ENCODE measurements at regions of chr10 and their contacts with region 1.

Region 1: GRCh38 chr10:96271016-96271829 is at the start of gene BLNK:
- DNase-seq: peak; percentile 40
- ATAC-seq: peak; percentile 56
- H3K4me3 Mint-ChIP-seq: peak within 1 kb of the TSS; percentile 91
- H3K27ac Mint-ChIP-seq: peak within 1 kb of the TSS; percentile 98
- H3K4me1 Mint-ChIP-seq: peaks cover 81% of the 10 kb centered on the region
- H3K27me3 Mint-ChIP-seq: no peaks in the 10 kb centered on the region
- CTCF ChIP-seq: no peak
- total RNA-seq, gene BLNK: 238 and 267 TPM in 2 replicates

Region 2: GRCh38 chr10:96138102-96138501 is 133.1 kb before region 1 on chr10:
- CTCF ChIA-PET with region 1: no interaction called
- POLR2A ChIA-PET with region 1: no interaction called
- intact Hi-C with region 1: no loop called
- DNase-seq: no peak
- ATAC-seq: no peak
- H3K4me3 Mint-ChIP-seq: no peak overlapping the region
- H3K27ac Mint-ChIP-seq: no peak overlapping the region
- H3K4me1 Mint-ChIP-seq: no peaks in the 10 kb centered on the region
- H3K27me3 Mint-ChIP-seq: no peaks in the 10 kb centered on the region
- CTCF ChIP-seq: no peak

Region 3: DNA sequence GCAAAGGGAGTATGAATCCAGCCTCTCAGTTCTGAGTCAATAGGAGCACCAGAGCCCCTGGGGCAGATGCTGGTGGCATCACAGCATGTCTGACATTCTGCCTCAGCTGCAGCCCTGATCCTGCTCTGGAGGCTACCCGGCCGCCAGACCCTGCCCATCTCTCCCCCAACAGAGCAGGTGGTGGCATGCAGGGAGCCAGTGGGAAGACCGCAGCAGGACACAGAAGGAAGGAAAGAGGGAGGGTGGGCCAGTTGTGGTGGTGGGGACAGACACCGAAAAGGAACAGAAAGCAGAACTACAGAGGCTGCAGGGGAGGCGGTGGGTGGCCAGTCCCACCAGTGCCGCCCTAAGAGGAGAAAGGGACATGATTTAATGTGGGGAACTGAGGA is 35.1 kb before region 1 on chr10:
- CTCF ChIA-PET with region 1: interaction called, 90 read pairs
- POLR2A ChIA-PET with region 1: interaction called, 94 read pairs
- intact Hi-C with region 1: no loop called
- DNase-seq: no peak
- ATAC-seq: peak; percentile 67
- H3K4me3 Mint-ChIP-seq: peak overlapping the region; percentile 57
- H3K27ac Mint-ChIP-seq: peak overlapping the region; percentile 85
- H3K4me1 Mint-ChIP-seq: peaks cover 93% of the 10 kb centered on the region
- H3K27me3 Mint-ChIP-seq: no peaks in the 10 kb centered on the region
- CTCF ChIP-seq: no peak

Region 4: GRCh38 chr10:96244354-96244753 is 26.9 kb before region 1 on chr10:
- CTCF ChIA-PET with region 1: interaction called, 4 read pairs
- POLR2A ChIA-PET with region 1: interaction called, 93 read pairs
- intact Hi-C with region 1: loop called (anchors 1 kb)
- DNase-seq: peak; percentile 61
- ATAC-seq: peak; percentile 96
- H3K4me3 Mint-ChIP-seq: peak overlapping the region; percentile 67
- H3K27ac Mint-ChIP-seq: peak overlapping the region; percentile 91
- H3K4me1 Mint-ChIP-seq: peaks cover 80% of the 10 kb centered on the region
- H3K27me3 Mint-ChIP-seq: no peaks in the 10 kb centered on the region
- CTCF ChIP-seq: no peak

Region 5: DNA sequence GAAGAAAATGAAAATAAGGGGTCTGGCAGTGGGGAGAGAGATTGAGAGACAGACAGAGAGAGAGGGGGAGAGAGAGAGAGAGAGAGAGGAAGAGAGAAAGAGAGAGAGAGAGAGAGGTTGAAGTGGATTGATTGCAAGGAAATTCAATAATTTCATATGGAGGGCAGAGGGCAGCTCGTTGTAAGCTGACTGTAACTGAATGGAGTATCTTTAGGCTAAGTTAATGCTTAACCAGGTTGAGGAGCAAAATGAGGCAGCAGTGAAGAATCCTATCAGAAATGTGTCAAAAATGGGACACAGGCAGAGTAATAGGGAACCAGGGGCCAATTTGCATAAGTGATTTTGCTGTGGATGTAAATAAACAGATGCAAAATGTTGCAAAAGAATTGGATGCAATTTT is 20.9 kb before region 1 on chr10:
- CTCF ChIA-PET with region 1: no interaction called
- POLR2A ChIA-PET with region 1: interaction called, 93 read pairs
- intact Hi-C with region 1: no loop called
- DNase-seq: no peak
- ATAC-seq: no peak
- H3K4me3 Mint-ChIP-seq: no peak overlapping the region
- H3K27ac Mint-ChIP-seq: peak overlapping the region; percentile 64
- H3K4me1 Mint-ChIP-seq: peaks cover 73% of the 10 kb centered on the region
- H3K27me3 Mint-ChIP-seq: no peaks in the 10 kb centered on the region
- CTCF ChIP-seq: no peak

Region 6: DNA sequence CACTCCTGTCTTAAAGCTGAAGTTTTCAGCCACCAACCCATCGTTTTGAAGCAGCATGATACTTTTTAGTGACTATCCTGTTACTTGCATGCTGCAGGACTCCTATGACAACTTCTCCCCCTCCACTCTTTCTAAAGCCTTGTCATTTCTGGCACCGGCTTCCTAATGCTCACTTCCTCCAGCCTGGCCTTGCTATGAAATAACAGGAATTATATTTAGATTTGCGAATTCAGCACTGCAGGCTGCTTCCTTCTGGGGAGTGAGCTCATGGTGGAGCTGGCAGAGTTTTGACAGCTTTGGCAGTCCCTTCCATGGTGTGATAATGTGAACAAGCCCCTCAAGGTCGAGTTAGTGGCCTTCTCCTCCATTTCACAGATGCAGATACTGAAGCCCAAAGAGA is 13.3 kb before region 1 on chr10:
- CTCF ChIA-PET with region 1: interaction called, 4 read pairs
- POLR2A ChIA-PET with region 1: interaction called, 93 read pairs
- intact Hi-C with region 1: loop called (anchors 1 kb)
- DNase-seq: no peak
- ATAC-seq: peak; percentile 16
- H3K4me3 Mint-ChIP-seq: peak overlapping the region; percentile 48
- H3K27ac Mint-ChIP-seq: peak overlapping the region; percentile 83
- H3K4me1 Mint-ChIP-seq: peaks cover 90% of the 10 kb centered on the region
- H3K27me3 Mint-ChIP-seq: no peaks in the 10 kb centered on the region
- CTCF ChIP-seq: no peak

Region 7: GRCh38 chr10:96287392-96288105 is 16.3 kb after region 1 on chr10:
- CTCF ChIA-PET with region 1: interaction called, 74 read pairs
- POLR2A ChIA-PET with region 1: interaction called, 344 read pairs
- intact Hi-C with region 1: loop called (anchors 1 kb)
- DNase-seq: no peak
- ATAC-seq: peak; percentile 72
- H3K4me3 Mint-ChIP-seq: peak overlapping the region; percentile 75
- H3K27ac Mint-ChIP-seq: peak overlapping the region; percentile 96
- H3K4me1 Mint-ChIP-seq: peaks cover 75% of the 10 kb centered on the region
- H3K27me3 Mint-ChIP-seq: no peaks in the 10 kb centered on the region
- CTCF ChIP-seq: no peak

Region 8: GRCh38 chr10:96431211-96431970 is 160.2 kb after region 1 on chr10:
- CTCF ChIA-PET with region 1: no interaction called
- POLR2A ChIA-PET with region 1: no interaction called
- intact Hi-C with region 1: no loop called
- DNase-seq: no peak
- ATAC-seq: no peak
- H3K4me3 Mint-ChIP-seq: no peak overlapping the region
- H3K27ac Mint-ChIP-seq: no peak overlapping the region
- H3K4me1 Mint-ChIP-seq: no peaks in the 10 kb centered on the region
- H3K27me3 Mint-ChIP-seq: peaks cover 20% of the 10 kb centered on the region
- CTCF ChIP-seq: no peak